ENCODE measurements at regions of chr1 and their contacts with region 1.

Region 1: GRCh38 chr1:209860293-209860881 is 32.6 kb downstream of the UTP25 start:
- DNase-seq: peak; percentile 87
- ATAC-seq: peak; percentile 89
- H3K4me3 Mint-ChIP-seq: no peak overlapping the region
- H3K27ac Mint-ChIP-seq: no peak overlapping the region
- H3K4me1 Mint-ChIP-seq: no peaks in the 10 kb centered on the region
- H3K27me3 Mint-ChIP-seq: peaks cover 8% of the 10 kb centered on the region
- CTCF ChIP-seq: peak; percentile 98

Region 2: DNA sequence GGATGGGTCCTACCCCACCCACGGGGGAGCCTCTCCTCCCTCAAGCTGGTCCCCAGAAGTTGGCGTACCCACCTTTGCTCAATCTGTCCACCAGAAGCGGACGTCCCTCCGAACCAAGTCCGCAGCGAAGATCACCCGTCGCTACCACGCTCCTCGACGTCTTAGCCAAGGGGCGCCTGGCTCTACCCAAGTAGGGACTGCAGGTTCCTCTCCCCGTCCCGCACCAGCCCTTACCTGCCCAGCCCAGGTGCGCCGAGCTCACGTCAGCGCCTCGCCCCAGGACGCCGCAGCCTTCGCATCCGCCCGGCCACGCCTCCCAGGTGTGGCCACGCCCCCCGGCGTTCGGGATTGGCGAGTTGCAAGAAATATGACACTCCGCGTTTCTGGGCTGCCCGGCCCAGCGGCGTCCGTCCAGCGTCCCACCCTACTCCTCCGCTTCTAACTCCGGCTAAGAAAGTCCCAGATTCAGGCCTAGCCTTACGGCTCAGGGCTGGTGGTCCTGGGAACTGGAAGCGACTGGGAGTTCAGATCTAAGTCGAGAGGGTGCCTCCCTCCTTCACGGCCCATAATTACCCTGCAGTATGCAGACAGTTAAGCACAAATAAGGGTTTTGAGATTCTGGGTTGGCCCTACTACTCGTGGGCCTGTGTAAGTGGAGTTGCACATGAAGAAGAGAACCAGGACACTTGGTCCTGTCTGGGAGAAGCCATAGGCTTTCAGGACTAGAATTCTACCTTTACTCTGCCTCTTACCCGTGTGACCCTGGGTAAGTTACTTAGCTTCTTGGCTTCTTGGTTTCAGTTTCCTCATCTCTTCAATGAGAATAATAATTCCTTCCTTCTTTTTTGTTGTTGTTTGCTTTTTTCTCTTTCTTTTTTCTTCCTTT is 54.3 kb before region 1 on chr1 and contains the start of gene IRF6:
- CTCF ChIA-PET with region 1: no interaction called
- POLR2A ChIA-PET with region 1: no interaction called
- intact Hi-C with region 1: no loop called
- DNase-seq: peak; percentile 79
- ATAC-seq: peak; percentile 94
- H3K4me3 Mint-ChIP-seq: peak within 1 kb of the TSS; percentile 77
- H3K27ac Mint-ChIP-seq: peak within 1 kb of the TSS; percentile 71
- H3K4me1 Mint-ChIP-seq: peaks cover 21% of the 10 kb centered on the region
- H3K27me3 Mint-ChIP-seq: peaks cover 3% of the 10 kb centered on the region
- CTCF ChIP-seq: no peak
- total RNA-seq, gene IRF6: 1.2 TPM

Region 3: DNA sequence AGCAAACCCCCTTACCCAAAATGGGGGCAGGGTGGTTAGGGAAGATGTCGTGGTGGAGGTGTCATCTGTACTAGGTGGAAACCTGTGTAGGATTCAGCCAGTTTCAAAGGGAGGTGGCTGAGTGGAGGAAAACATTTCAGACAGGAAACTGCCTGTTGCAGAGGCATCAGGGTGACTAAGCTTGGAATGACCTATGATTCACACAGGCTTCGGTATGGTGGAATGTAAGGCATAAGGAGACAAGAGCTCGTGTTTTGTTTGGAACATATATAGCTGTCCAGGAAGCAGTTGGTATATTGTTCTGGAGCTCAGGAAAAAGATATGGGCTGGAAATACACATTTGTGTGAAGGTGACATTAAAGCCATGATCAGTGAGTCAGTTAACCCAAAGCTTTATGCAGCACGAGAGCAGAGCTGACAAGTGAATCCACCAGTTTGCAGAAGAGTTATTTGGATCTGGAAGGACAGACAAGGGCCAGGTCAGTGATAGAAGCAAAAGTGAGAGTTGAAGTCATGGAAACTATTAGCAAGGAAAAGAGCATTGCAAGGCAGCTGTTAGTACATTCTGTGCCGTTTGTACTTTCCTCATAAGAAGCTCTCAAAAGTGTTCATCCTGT is 20.4 kb before region 1 on chr1:
- CTCF ChIA-PET with region 1: interaction called, 13 read pairs
- POLR2A ChIA-PET with region 1: no interaction called
- intact Hi-C with region 1: no loop called
- DNase-seq: peak; percentile 17
- ATAC-seq: peak; percentile 72
- H3K4me3 Mint-ChIP-seq: no peak overlapping the region
- H3K27ac Mint-ChIP-seq: peak overlapping the region; percentile 73
- H3K4me1 Mint-ChIP-seq: peaks cover 36% of the 10 kb centered on the region
- H3K27me3 Mint-ChIP-seq: no peaks in the 10 kb centered on the region
- CTCF ChIP-seq: no peak

Region 4: GRCh38 chr1:209989525-209989924 is 129.1 kb after region 1 on chr1:
- CTCF ChIA-PET with region 1: interaction called, 47 read pairs
- POLR2A ChIA-PET with region 1: no interaction called
- intact Hi-C with region 1: loop called (anchors 1 kb)
- DNase-seq: no peak
- ATAC-seq: no peak
- H3K4me3 Mint-ChIP-seq: no peak overlapping the region
- H3K27ac Mint-ChIP-seq: no peak overlapping the region
- H3K4me1 Mint-ChIP-seq: no peaks in the 10 kb centered on the region
- H3K27me3 Mint-ChIP-seq: peaks cover 15% of the 10 kb centered on the region
- CTCF ChIP-seq: peak; percentile 22

Region 5: DNA sequence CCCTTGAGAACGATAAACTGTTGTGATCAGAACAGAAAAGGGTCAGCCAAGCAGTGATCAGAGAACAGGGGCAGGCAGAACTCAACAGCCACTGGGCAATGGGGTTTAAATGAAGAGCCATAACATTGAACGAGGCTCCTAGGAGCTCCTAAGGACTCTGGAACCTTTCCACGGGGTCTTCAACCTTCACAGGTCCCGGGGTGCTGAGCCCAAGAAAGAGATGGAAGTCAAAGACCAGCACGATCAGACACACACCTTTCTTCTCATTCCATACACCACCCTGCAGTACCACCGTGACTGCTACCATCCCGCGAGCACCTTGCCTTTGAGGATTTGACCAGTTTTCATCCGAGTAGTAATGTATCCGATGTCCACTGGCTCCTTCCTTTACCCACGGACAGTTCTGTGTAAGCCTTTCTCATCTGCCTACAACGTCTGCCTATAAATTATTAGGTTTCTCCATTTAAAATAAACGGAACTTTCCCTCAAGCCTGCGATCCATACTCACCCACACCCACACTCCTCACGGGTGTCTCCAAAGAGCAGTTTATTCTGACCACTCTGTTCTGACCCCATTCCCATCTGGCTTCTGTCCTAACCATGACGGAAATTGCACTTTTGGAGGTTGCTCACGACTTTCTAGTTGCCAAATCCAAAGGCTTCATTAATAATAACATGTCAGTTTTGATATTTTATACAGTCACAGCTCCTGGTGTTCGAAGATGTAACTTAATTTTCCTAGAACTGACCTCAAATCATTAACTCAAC is 451.5 kb after region 1 on chr1:
- CTCF ChIA-PET with region 1: interaction called, 10 read pairs
- POLR2A ChIA-PET with region 1: no interaction called
- intact Hi-C with region 1: loop called (anchors 2 kb)
- DNase-seq: no peak
- ATAC-seq: no peak
- H3K4me3 Mint-ChIP-seq: peak overlapping the region; percentile 73
- H3K27ac Mint-ChIP-seq: no peak overlapping the region
- H3K4me1 Mint-ChIP-seq: peaks cover 4% of the 10 kb centered on the region
- H3K27me3 Mint-ChIP-seq: peaks cover 11% of the 10 kb centered on the region
- CTCF ChIP-seq: no peak